Activated B cell treated with CpG ODN at 0.5 μM for 24 hours (primary cell): ENCODE measurements at regions of chr14 and their contacts with region 1.

Region 1: DNA sequence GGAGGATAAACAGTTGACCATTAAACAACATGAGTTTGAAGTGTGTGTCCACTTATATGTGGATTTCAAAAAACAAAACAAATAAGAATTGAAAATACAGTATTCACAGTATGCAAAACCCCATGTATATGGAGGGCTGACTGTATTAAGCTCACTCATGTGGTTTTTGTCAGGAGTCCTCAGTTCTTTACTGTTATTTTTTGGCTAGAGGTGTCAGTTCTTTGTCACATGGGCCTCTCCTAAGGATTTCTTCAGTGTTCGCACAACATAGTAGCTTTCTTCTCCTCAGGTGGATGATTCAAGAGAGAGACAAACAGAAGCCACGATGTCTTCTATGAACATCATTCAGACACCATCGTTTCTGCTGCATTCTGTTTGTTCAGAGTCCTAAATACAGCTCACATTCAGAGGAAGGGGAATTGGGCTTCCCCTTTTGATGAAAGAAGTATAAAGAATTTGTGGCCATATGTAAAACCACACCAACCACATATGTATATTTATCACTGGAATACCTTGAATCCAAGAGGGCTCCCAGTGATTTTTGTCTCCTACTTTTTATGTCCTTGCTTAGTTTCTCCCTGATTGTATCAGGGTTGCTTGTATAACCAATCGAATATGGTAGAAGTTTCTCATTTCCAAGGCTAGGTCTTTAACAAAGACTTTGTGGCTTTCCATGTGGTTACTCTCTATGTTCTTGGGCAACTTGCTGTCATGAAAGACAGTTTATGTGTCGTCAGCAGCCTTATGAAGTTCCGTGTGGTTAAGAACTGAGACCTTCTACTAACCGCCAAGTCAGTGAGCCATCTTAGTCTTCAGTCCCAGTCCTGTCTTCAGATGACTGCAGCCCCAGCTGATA is 18.9 kb downstream of the MNAT1 start:
- DNase-seq: no peak
- ATAC-seq: peak; percentile 95
- H3K4me3 Mint-ChIP-seq: peak overlapping the region; percentile 52
- H3K27ac Mint-ChIP-seq: peak overlapping the region; percentile 81
- H3K4me1 Mint-ChIP-seq: peaks cover 42% of the 10 kb centered on the region
- H3K27me3 Mint-ChIP-seq: no peaks in the 10 kb centered on the region
- CTCF ChIP-seq: no peak

Region 2: DNA sequence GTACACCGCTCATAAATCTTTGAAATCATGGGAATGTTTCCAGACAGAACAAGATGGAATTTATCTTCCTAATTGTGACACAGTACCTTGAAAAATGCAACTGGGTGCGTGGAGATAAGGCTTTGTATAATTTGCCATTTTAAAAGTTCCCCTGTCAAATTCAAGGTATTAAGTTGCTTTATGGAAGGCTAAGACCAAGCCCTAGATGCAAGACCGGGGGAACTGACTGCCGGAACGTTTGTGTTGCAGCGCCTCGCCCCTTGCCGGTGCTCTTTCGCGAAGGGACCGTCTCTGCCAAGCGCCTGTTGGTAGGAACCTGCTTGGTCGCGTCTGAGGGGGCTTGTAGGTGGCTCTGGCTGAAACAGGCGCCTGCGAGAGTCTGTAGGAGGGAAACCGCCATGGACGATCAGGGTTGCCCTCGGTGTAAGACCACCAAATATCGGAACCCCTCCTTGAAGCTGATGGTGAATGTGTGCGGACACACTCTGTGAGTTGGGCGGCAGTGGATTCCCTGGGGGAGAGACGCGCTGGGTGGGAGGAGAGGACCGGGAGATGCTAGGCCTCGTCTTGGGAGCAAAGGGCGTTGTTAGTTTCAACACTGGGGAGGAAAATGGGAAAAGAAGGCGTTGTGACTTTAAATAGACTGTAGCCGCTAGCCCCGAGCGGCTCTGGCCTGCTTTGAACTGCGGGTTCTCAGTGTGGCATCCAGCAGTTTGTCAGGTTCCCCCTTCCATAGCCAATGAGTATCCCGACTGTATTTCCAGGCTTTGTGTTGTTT is 18.8 kb before region 1 on chr14 and contains the start of gene MNAT1:
- CTCF ChIA-PET with region 1: no interaction called
- POLR2A ChIA-PET with region 1: interaction called, 5 read pairs
- intact Hi-C with region 1: loop called (anchors 1 kb)
- DNase-seq: peak; percentile 74
- ATAC-seq: peak; percentile 98
- H3K4me3 Mint-ChIP-seq: peak within 1 kb of the TSS; percentile 100
- H3K27ac Mint-ChIP-seq: peak within 1 kb of the TSS; percentile 93
- H3K4me1 Mint-ChIP-seq: peaks cover 25% of the 10 kb centered on the region
- H3K27me3 Mint-ChIP-seq: peaks cover 21% of the 10 kb centered on the region
- CTCF ChIP-seq: no peak
- total RNA-seq, gene MNAT1: 33.6 and 37.1 TPM in 2 replicates

Region 3: DNA sequence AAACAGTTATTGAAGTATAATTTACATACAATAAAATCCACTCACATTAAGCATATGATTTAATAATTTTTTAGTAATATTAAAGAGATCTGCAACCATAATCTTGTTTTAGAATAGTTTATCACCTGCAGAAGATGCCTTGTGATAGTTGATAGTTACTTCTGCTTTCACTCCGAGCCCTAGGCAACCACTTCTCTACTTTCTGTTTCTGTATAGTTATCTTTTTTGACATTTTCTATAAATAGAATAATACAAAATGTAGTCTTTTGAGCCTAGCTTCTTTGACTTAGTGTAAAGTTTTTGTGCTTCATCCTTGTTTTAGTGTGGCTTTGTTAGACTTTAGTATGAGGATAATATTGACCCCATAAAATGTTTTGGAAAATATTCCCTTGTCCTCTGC is 92.0 kb after region 1 on chr14:
- CTCF ChIA-PET with region 1: no interaction called
- POLR2A ChIA-PET with region 1: interaction called, 3 read pairs
- intact Hi-C with region 1: loop called (anchors 2 kb)
- DNase-seq: no peak
- ATAC-seq: peak; percentile 83
- H3K4me3 Mint-ChIP-seq: peak overlapping the region; percentile 64
- H3K27ac Mint-ChIP-seq: peak overlapping the region; percentile 92
- H3K4me1 Mint-ChIP-seq: peaks cover 23% of the 10 kb centered on the region
- H3K27me3 Mint-ChIP-seq: no peaks in the 10 kb centered on the region
- CTCF ChIP-seq: no peak

Region 4: DNA sequence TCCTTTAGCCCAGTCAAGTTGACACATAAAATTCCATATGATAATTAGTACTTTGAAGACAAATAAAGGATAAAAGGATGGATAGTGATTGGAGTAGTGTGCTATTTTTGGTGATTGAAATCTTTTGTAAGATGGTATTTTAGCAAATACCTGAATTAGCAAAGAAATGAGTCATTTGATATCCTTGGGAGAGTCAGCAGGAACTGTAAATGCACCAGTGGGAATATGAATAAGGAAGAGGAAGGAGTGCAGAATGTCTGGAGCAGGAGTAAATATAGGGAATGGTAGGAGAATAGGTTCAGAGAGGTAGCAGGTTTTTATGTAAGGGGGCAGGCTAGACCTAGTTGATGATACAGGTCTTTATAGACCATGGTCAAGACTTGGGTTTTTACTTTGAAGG is 152.4 kb after region 1 on chr14:
- CTCF ChIA-PET with region 1: no interaction called
- POLR2A ChIA-PET with region 1: no interaction called
- intact Hi-C with region 1: no loop called
- DNase-seq: no peak
- ATAC-seq: no peak
- H3K4me3 Mint-ChIP-seq: no peak overlapping the region
- H3K27ac Mint-ChIP-seq: no peak overlapping the region
- H3K4me1 Mint-ChIP-seq: peaks cover 3% of the 10 kb centered on the region
- H3K27me3 Mint-ChIP-seq: no peaks in the 10 kb centered on the region
- CTCF ChIP-seq: no peak